Activated CD4-positive, alpha-beta memory T cell treated with anti-CD3 and anti-CD28 coated beads for 36 hours (primary cell): ENCODE measurements at regions of chr5 and their contacts with region 1.

Region 1: DNA sequence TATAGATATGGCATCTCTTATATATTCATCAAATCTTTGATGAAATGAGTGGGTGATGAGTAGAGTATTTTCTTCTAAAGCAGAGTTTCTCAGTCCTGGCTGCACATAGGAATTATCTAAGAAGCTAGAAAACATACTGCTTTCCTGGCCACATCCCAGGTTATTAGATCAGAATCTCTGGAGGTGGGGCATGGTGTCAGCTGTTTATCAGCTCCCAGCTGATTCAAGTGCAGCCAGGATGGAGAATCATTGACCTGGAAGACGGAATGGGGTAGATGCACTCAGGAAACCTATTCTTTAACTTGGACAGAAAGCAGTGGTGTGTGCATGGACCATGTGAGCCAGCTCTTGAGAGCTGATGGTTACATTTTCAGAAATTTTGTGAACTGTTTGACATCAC is 108.1 kb upstream of the IL6ST start:
- DNase-seq: no peak
- H3K4me3 Mint-ChIP-seq: no peak overlapping the region
- H3K27ac Mint-ChIP-seq: no peak overlapping the region
- H3K4me1 Mint-ChIP-seq: peaks cover 78% of the 10 kb centered on the region
- H3K27me3 Mint-ChIP-seq: no peaks in the 10 kb centered on the region

Region 2: DNA sequence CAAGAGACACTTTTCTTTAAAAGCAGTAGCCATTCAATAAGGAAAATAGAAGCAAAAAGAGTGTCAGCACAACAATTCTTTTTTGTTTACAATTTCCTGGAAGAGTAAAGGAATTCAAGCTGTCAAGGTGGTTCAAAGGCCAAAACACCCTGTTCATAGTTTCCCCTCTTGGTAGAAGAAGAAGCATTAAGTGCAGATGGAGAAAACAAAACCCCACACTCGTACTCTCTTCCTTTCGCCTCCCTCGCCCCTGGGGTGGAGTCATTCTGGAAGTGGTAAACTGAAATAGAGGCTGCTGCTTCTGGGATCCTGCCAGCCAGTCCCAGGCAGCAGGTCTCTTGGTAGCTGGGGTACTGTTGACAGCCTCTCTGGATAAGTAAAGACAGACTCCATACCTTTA is 25.2 kb after region 1 on chr5:
- CTCF ChIA-PET with region 1: no interaction called
- POLR2A ChIA-PET with region 1: no interaction called
- intact Hi-C with region 1: loop called (anchors 1 kb)
- DNase-seq: peak; percentile 77
- H3K4me3 Mint-ChIP-seq: peak overlapping the region; percentile 44
- H3K27ac Mint-ChIP-seq: peak overlapping the region; percentile 85
- H3K4me1 Mint-ChIP-seq: peaks cover 60% of the 10 kb centered on the region
- H3K27me3 Mint-ChIP-seq: no peaks in the 10 kb centered on the region

Region 3: DNA sequence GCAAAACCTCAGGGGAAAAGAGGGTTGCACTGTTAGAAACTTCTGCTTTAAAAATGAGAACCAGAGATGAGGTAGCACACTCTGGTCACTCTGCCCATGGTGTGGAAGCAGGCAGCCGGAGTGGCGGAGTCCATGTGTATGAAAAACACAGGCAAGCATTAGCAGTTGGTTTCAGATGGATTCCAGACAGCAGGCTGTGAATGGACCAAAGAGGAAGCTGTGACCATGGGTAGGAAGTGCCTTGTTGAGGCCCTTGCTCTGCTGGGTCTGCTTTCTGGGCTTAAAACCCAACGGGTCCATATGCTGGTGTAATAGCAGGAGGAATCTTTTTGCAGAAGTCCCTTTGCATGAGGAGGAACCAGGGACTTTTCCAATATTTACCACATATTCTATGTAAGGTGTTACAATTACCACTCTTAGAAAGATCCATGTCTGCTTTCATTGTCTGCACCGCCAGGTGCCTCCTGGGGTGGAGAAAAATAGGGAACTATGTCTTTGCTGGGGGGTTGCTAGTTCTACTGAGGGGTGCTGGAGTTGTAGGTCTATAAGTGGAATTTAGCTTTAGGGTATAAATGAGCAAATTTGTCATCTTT is 53.2 kb after region 1 on chr5:
- CTCF ChIA-PET with region 1: no interaction called
- POLR2A ChIA-PET with region 1: no interaction called
- intact Hi-C with region 1: loop called (anchors 5 kb)
- DNase-seq: no peak
- H3K4me3 Mint-ChIP-seq: peak overlapping the region; percentile 14
- H3K27ac Mint-ChIP-seq: peak overlapping the region; percentile 88
- H3K4me1 Mint-ChIP-seq: peaks cover 73% of the 10 kb centered on the region
- H3K27me3 Mint-ChIP-seq: no peaks in the 10 kb centered on the region